ENCODE measurements at regions of chr7 and their contacts with region 1.

Region 1: GRCh38 chr7:30164567-30164966 is 29.8 kb downstream of the MTURN start:
- DNase-seq: no peak
- H3K4me3 ChIP-seq: no peak overlapping the region
- H3K27ac ChIP-seq: peak overlapping the region in 3 of 4 donors; percentile 34 to 65 (median 59)
- H3K4me1 ChIP-seq: peaks cover 19 to 64% (median 47%) of the 10 kb centered on the region in 4 donors
- H3K27me3 ChIP-seq: no peaks in the 10 kb centered on the region
- CTCF ChIP-seq: peak; percentile 59 to 69 (median 67)
- EP300 ChIP-seq: no peak
- POLR2A ChIP-seq: no peak

Region 2: GRCh38 chr7:29988424-29989256 is 175.9 kb before region 1 on chr7:
- intact Hi-C with region 1: no loop called
- DNase-seq: no peak
- H3K4me3 ChIP-seq: peak overlapping the region; percentile 79 to 99 (median 97)
- H3K27ac ChIP-seq: peak overlapping the region; percentile 92 to 97 (median 95)
- H3K4me1 ChIP-seq: peaks cover 8 to 38% (median 28%) of the 10 kb centered on the region in 4 donors
- H3K27me3 ChIP-seq: no peaks in the 10 kb centered on the region
- CTCF ChIP-seq: no peak
- EP300 ChIP-seq: no peak
- POLR2A ChIP-seq: no peak

Region 3: GRCh38 chr7:30116771-30117170 is 47.8 kb before region 1 on chr7:
- intact Hi-C with region 1: no loop called
- DNase-seq: no peak
- H3K4me3 ChIP-seq: no peak overlapping the region
- H3K27ac ChIP-seq: no peak overlapping the region
- H3K4me1 ChIP-seq: no peaks in the 10 kb centered on the region
- H3K27me3 ChIP-seq: no peaks in the 10 kb centered on the region
- CTCF ChIP-seq: no peak
- EP300 ChIP-seq: no peak
- POLR2A ChIP-seq: no peak

Region 4: DNA sequence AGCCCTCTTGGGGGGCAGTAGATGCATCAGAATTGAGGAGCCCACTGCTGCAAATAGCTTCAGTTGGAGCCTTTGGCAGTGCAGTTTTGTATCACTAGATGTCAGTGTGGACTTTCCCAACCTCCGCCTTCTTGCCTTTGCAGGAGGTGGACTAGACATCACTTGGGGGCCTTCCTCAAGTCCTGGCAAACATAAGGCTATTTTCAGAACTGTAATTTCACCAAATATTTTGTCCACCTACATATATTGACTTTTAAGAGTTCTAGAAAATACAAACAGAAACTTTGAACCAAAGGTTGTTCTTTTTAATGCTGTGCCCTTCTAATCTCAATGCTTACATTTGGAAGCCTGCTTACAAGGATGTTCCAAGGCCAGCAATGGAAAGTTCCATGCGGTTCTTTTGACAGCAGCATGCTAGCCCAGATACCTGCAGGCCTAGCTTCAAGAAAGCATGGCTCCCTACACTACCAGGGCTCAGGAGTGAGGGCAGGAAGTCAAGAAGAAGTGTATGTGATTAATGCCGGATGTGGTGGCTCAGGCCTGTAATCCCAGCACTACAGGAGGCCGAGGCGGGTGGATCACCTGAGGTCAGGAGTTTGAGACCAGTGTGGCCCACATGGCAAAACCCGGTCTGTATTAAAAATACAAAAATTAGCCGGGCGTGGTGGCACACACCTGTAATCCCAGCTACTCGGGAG is 111.8 kb after region 1 on chr7:
- intact Hi-C with region 1: loop called (anchors 10 kb)
- DNase-seq: no peak
- H3K4me3 ChIP-seq: no peak overlapping the region
- H3K27ac ChIP-seq: no peak overlapping the region
- H3K4me1 ChIP-seq: peaks cover 0 to 12% (median 6%) of the 10 kb centered on the region in 4 donors
- H3K27me3 ChIP-seq: no peaks in the 10 kb centered on the region
- CTCF ChIP-seq: peak; percentile 58 to 76 (median 64)
- EP300 ChIP-seq: no peak
- POLR2A ChIP-seq: no peak

Region 5: DNA sequence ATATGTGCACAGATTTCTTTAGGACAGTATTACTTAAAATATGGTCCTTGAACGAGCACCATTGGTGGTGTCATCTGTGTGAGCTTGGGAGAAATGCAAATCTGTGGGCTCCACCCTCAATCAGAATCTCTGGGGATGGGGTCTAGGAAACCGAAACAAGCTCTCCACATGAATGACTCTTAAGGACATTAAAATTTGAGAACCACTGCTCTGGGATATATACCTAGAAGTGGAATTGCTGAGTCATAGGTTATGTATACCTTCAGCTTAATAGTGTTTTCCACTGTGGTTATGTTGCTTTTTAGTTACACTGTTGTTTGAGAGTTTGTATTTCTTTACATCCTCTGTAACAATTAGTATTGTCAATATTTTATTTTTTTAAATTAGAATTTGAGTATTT is 143.8 kb after region 1 on chr7:
- intact Hi-C with region 1: no loop called
- DNase-seq: no peak
- H3K4me3 ChIP-seq: no peak overlapping the region
- H3K27ac ChIP-seq: no peak overlapping the region
- H3K4me1 ChIP-seq: peaks cover 12 to 45% (median 38%) of the 10 kb centered on the region in 4 donors
- H3K27me3 ChIP-seq: no peaks in the 10 kb centered on the region
- CTCF ChIP-seq: no peak
- EP300 ChIP-seq: no peak
- POLR2A ChIP-seq: no peak

Region 6: DNA sequence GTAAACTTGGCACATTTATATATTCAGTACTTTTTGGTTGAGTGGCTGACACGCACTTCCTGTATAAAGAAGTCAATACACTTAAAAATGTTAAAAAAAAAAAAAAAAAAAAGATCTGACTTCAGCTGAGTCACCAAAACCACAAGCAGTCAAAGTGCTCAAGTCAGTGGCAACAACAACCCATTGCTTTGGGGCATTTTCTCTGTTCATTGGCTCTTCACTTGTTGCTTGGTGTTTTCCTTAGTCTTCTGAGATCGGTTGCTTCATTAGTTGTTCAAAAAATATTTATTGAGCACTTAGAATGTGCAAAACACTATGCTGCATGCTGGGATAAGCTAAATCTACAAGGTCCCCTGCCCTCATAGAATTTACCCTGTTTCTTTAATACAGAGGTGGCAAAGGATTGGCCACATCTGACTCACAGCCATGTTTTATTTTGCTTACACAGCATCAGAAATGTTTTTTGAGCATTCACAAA is 183.6 kb after region 1 on chr7:
- intact Hi-C with region 1: no loop called
- DNase-seq: no peak
- H3K4me3 ChIP-seq: no peak overlapping the region
- H3K27ac ChIP-seq: no peak overlapping the region
- H3K4me1 ChIP-seq: peaks cover 0 to 63% (median 61%) of the 10 kb centered on the region in 4 donors
- H3K27me3 ChIP-seq: no peaks in the 10 kb centered on the region
- CTCF ChIP-seq: no peak
- EP300 ChIP-seq: no peak
- POLR2A ChIP-seq: no peak

Region 7: DNA sequence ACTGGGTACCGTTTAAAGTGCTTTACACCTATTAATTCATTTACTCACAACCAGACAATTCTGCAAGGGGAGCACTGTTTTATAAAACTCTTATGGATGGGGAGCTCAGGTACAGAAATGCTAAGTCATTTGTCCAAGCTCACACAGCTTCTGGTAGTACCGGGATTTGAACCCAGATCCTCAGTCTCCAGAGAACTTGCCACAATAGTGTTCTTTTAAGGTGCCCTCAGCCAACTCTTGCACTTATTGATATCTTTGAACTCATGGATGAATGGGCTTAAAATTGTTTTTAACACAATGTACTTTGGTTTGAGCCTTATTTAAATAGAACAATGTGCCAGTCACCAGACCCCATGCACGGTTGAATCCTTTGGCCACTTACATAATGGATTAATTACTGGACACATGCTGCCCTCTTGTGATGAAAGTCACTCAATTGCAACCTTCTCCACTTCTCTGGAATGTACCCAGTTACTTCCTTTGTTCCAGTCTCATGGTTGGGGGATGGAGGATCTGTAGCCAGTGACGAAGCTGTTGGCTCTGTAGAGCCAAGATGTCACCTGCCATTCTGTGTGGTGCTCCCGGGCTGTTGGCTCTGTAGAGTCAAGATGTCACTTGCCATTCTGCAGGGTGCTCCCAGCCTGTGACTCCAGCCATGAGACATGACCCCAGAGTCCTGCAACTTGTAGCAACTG is 248.4 kb after region 1 on chr7:
- intact Hi-C with region 1: loop called (anchors 2 kb)
- DNase-seq: peak; percentile 91
- H3K4me3 ChIP-seq: no peak overlapping the region
- H3K27ac ChIP-seq: no peak overlapping the region
- H3K4me1 ChIP-seq: peaks cover 0 to 19% (median 8%) of the 10 kb centered on the region in 4 donors
- H3K27me3 ChIP-seq: no peaks in the 10 kb centered on the region
- CTCF ChIP-seq: peak; percentile 63 to 83 (median 66)
- EP300 ChIP-seq: no peak
- POLR2A ChIP-seq: no peak